ENCODE measurements at regions of chr1 and their contacts with region 1.

Region 1: DNA sequence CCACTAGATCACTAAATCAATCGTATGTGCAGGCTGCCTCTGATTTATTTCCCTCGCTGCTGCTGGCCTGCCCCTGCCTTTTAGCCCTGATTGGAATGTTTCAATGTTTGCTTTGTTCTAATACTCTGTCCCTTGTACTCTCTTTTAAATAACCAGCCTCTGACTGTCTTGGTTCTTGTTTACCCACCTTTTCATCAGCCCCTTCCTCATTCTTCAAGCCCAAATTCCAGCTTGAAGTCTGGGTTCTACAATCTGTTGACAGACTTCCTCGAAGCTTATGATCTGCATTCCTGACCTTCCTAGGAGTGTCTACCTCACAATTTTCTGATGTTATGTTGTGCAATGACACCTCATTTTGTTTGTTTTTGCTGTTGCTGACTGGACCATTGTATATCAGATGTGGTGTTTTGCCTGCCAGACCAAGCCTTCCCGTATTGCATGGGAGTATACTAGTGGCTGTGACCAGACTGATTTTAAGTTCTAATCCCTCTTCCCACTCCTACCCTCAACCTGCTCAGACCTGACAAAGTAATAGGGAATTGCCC is 46.6 kb upstream of the APOBEC4 start:
- DNase-seq: no peak
- ATAC-seq: no peak
- H3K4me3 Mint-ChIP-seq: no peak overlapping the region
- H3K27ac Mint-ChIP-seq: no peak overlapping the region
- H3K4me1 Mint-ChIP-seq: peaks cover 15% of the 10 kb centered on the region
- H3K27me3 Mint-ChIP-seq: no peaks in the 10 kb centered on the region

Region 2: DNA sequence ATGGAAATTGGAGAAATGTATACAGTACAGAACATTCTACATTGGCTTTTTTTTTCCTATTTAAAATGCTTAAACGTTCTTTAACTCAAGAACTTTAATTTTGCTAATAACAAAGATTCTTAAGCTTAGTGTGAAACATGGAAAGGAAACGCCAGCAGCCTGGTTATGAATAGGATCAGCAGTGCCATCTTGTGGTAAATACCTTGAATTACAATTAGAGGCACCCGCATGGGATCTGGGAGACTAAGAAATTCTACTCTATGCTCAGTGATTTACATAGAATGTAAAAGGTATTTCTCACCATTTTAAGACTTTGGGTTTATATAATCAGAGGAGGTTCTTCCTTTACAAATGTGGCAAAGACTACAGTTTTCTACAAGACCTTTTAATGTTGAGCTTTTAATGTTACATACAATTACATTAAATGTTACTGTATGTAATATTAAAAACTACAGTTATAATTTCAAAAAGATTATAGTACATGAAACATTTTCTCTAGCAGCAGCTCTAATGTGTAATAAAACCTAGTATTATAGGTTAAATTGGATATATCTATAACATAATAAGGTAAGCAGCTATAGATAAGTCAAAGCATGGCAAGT is 14.5 kb before region 1 on chr1:
- CTCF ChIA-PET with region 1: interaction called, 23 read pairs
- POLR2A ChIA-PET with region 1: no interaction called
- intact Hi-C with region 1: no loop called
- DNase-seq: peak; percentile 30
- ATAC-seq: peak; percentile 66
- H3K4me3 Mint-ChIP-seq: no peak overlapping the region
- H3K27ac Mint-ChIP-seq: no peak overlapping the region
- H3K4me1 Mint-ChIP-seq: peaks cover 7% of the 10 kb centered on the region
- H3K27me3 Mint-ChIP-seq: peaks cover 4% of the 10 kb centered on the region